Common myeloid progenitor, CD34-positive (primary cell): ENCODE measurements at regions of chr10 and their contacts with region 1.

Region 1: GRCh38 chr10:102420810-102421644 is at the start of gene FBXL15:
- DNase-seq: peak; percentile 96 to 98 (median 98)
- H3K4me3 ChIP-seq: peak within 1 kb of the TSS; percentile 87 to 96 (median 90)
- H3K27ac ChIP-seq: peak within 1 kb of the TSS; percentile 47 to 85
- H3K4me1 ChIP-seq: peaks cover 3 to 46% (median 40%) of the 10 kb centered on the region in 4 experiments
- H3K27me3 ChIP-seq: peaks cover 6 to 25% (median 11%) of the 10 kb centered on the region in 5 experiments

Region 2: DNA sequence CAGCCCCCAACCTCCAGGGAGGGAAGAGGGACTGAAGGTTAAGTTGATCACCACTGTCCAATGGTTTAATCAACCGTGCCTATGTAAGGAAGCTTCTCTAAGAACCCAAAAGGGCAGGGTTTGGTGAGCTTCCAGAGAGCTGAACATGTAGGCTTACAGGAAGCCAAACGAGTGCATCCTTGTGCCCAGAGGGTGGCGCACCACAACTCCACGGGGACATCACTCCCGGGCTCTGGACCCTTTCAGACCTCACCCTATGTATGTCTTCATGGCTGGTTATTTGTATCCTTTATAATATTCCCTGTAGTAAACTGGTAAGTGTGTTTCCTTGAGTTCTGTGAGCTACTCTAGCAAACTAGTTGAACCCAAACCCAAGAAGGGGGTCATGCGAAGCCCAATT is 37.0 kb before region 1 on chr10:
- CTCF ChIA-PET with region 1: interaction called, 28 read pairs
- POLR2A ChIA-PET with region 1: no interaction called
- DNase-seq: peak in 1 of 3 donors; percentile 51
- H3K4me3 ChIP-seq: no peak overlapping the region
- H3K27ac ChIP-seq: no peak overlapping the region
- H3K4me1 ChIP-seq: no peaks in the 10 kb centered on the region
- H3K27me3 ChIP-seq: no peaks in the 10 kb centered on the region

Region 3: GRCh38 chr10:102399217-102400089 is 21.6 kb before region 1 on chr10:
- CTCF ChIA-PET with region 1: interaction called, 31 read pairs
- POLR2A ChIA-PET with region 1: interaction called, 28 read pairs
- DNase-seq: peak; percentile 88 to 92 (median 92)
- H3K4me3 ChIP-seq: peak overlapping the region; percentile 32 to 75 (median 44)
- H3K27ac ChIP-seq: no peak overlapping the region
- H3K4me1 ChIP-seq: peaks cover 0 to 33% (median 28%) of the 10 kb centered on the region in 4 experiments
- H3K27me3 ChIP-seq: no peaks in the 10 kb centered on the region

Region 4: GRCh38 chr10:102432162-102432950 is 11.3 kb after region 1 on chr10 and contains the start of gene CUEDC2:
- CTCF ChIA-PET with region 1: interaction called, 71 read pairs
- POLR2A ChIA-PET with region 1: interaction called, 9 read pairs
- DNase-seq: peak; percentile 96 to 98 (median 98)
- H3K4me3 ChIP-seq: peak within 1 kb of the TSS; percentile 56 to 98 (median 83)
- H3K27ac ChIP-seq: peak within 1 kb of the TSS; percentile 64 to 84
- H3K4me1 ChIP-seq: peaks cover 14 to 49% (median 48%) of the 10 kb centered on the region in 4 experiments
- H3K27me3 ChIP-seq: no peaks in the 10 kb centered on the region

Region 5: GRCh38 chr10:102461187-102462054 is 40.4 kb after region 1 on chr10:
- CTCF ChIA-PET with region 1: interaction called, 12 read pairs
- POLR2A ChIA-PET with region 1: no interaction called
- DNase-seq: peak; percentile 84 to 91 (median 89)
- H3K4me3 ChIP-seq: peak overlapping the region; percentile 49 to 83 (median 68)
- H3K27ac ChIP-seq: peak overlapping the region in 1 of 2 experiments; percentile 58
- H3K4me1 ChIP-seq: peaks cover 0 to 23% (median 15%) of the 10 kb centered on the region in 4 experiments
- H3K27me3 ChIP-seq: peaks cover 0 to 18% (median 0%) of the 10 kb centered on the region in 5 experiments